Activated CD8-positive, alpha-beta T cell treated with anti-CD3 and anti-CD28 coated beads for 36 hours (primary cell): ENCODE measurements at regions of chr17 and their contacts with region 1.

Region 1: DNA sequence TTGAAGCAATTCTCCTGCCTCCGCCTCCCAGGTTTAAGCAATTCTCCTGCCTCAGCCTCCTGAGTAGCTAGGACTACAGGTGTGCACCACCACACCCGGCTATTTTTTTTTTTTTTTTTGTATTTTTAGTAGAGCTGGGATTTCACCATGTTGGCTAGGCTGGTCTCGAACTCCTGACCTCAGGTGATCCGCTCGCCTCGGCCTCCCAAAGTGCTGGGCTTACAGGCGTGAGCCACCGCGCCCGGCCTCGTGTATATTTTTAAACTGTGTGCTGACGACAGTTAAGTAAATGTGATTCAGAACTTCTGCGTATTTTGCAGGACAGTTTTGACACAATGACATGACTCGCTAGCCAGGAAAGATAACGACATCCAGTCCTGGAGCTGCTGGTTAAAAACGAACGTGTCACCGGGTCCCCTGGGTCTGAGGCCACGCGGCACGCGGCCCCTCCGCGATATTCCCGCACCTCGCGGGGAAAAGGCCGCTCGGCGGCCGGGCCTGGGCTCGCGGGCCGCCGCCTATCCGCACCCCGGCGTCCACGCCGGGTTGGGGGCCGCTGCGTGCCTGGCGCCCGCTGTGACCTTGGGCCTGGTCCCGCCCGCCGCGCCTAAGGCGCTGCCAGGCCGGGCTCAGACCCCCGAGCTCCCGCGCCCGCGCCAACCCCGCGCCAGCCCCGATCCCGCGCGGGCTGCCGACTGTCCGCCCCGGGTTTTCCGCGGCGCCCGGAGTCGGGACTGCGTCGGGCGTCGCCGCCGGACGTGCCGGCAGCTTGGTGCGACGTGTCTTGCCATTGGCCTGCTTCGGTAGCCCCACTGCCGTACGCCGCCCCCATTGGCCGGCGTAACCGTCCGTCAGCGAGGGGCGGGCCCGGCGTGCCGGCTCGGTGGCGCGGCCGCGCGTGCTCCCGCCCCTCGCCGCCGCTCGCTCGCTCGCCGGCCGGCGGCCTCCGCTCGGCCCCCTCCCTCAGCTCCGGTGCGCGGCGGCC is at the start of gene FOXK2:
- DNase-seq: peak; percentile 91
- ATAC-seq: peak; percentile 99
- H3K4me3 Mint-ChIP-seq: peak within 1 kb of the TSS; percentile 89
- H3K27ac Mint-ChIP-seq: peak within 1 kb of the TSS; percentile 83
- H3K4me1 Mint-ChIP-seq: peaks cover 21% of the 10 kb centered on the region
- H3K27me3 Mint-ChIP-seq: no peaks in the 10 kb centered on the region
- CTCF ChIP-seq: no peak
- total RNA-seq, gene FOXK2: 55.6 to 59.5 TPM

Region 2: GRCh38 chr17:82450170-82451106 is 68.7 kb before region 1 on chr17 and contains the start of gene CYBC1:
- CTCF ChIA-PET with region 1: no interaction called
- POLR2A ChIA-PET with region 1: interaction called, 10 read pairs
- intact Hi-C with region 1: no loop called
- DNase-seq: peak; percentile 96
- ATAC-seq: peak; percentile 72
- H3K4me3 Mint-ChIP-seq: peak within 1 kb of the TSS; percentile 99
- H3K27ac Mint-ChIP-seq: peak within 1 kb of the TSS; percentile 100
- H3K4me1 Mint-ChIP-seq: peaks cover 27% of the 10 kb centered on the region
- H3K27me3 Mint-ChIP-seq: no peaks in the 10 kb centered on the region
- CTCF ChIP-seq: no peak
- total RNA-seq, gene CYBC1: 189 to 192 TPM

Region 3: DNA sequence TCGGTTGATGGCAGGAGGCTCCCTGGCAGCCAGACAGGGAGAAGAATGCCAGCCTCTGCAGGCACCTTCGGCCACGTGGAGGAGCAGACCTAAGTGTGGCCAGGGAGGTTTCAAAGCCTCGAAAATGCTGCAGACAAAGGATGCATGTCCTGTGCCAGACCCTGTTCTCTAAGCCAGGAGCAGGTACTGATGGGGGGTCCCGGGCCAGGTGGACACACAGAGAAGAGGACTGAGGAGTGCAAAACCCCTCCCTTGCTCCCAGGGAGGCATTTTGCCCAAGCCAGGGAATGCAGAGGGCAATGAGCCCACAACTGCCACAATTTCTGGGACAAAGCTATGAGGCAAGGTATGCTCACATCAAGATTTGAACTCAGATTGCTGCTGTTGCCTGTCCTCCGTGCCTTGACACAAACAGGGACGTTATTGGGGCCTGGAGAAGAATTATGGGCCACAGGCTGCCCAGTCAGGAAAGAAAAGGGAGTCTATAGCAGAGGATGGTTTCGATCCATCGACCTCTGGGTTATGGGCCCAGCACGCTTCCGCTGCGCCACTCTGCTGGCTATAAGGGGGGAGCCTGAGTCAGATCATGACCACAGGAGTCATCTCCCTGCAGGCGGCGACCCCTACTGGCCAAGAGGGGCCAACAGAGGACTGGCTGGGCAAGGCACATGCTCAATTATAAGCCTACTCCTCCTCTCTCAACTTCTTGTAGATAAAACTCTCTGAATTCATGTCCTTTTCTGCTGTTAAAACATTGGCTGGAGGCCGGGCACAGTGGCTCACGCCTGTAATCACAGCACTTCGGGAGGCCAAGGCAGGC is 24.7 kb before region 1 on chr17:
- CTCF ChIA-PET with region 1: no interaction called
- POLR2A ChIA-PET with region 1: interaction called, 32 read pairs
- intact Hi-C with region 1: no loop called
- DNase-seq: peak; percentile 93
- ATAC-seq: peak; percentile 84
- H3K4me3 Mint-ChIP-seq: peak overlapping the region; percentile 72
- H3K27ac Mint-ChIP-seq: peak overlapping the region; percentile 85
- H3K4me1 Mint-ChIP-seq: peaks cover 18% of the 10 kb centered on the region
- H3K27me3 Mint-ChIP-seq: no peaks in the 10 kb centered on the region
- CTCF ChIP-seq: peak; percentile 91

Region 4: GRCh38 chr17:82503094-82503727 is 15.9 kb before region 1 on chr17:
- CTCF ChIA-PET with region 1: interaction called, 3 read pairs
- POLR2A ChIA-PET with region 1: interaction called, 14 read pairs
- intact Hi-C with region 1: no loop called
- DNase-seq: no peak
- ATAC-seq: no peak
- H3K4me3 Mint-ChIP-seq: no peak overlapping the region
- H3K27ac Mint-ChIP-seq: no peak overlapping the region
- H3K4me1 Mint-ChIP-seq: peaks cover 12% of the 10 kb centered on the region
- H3K27me3 Mint-ChIP-seq: no peaks in the 10 kb centered on the region
- CTCF ChIP-seq: no peak

Region 5: GRCh38 chr17:82561429-82562035 is 42.4 kb after region 1 on chr17:
- CTCF ChIA-PET with region 1: no interaction called
- POLR2A ChIA-PET with region 1: no interaction called
- intact Hi-C with region 1: no loop called
- DNase-seq: no peak
- ATAC-seq: no peak
- H3K4me3 Mint-ChIP-seq: no peak overlapping the region
- H3K27ac Mint-ChIP-seq: no peak overlapping the region
- H3K4me1 Mint-ChIP-seq: peaks cover 28% of the 10 kb centered on the region
- H3K27me3 Mint-ChIP-seq: no peaks in the 10 kb centered on the region
- CTCF ChIP-seq: no peak